SK-N-SH (cell line): ENCODE measurements at regions of chr10 and their contacts with region 1.

Region 1: GRCh38 chr10:127576051-127576450 is 26.9 kb downstream of the NPS start:
- DNase-seq: no peak
- H3K4me3 ChIP-seq: no peak overlapping the region
- H3K27ac ChIP-seq: no peak overlapping the region
- H3K4me1 ChIP-seq: no peaks in the 10 kb centered on the region
- H3K27me3 ChIP-seq: no peaks in the 10 kb centered on the region
- CTCF ChIP-seq: no peak
- EP300 ChIP-seq: no peak
- RAD21 ChIP-seq: no peak

Region 2: GRCh38 chr10:127492607-127493250 is 83.3 kb before region 1 on chr10:
- CTCF ChIA-PET with region 1: no interaction called
- POLR2A ChIA-PET with region 1: no interaction called
- DNase-seq: no peak
- H3K4me3 ChIP-seq: no peak overlapping the region
- H3K27ac ChIP-seq: no peak overlapping the region
- H3K4me1 ChIP-seq: peaks cover 0 to 6% of the 10 kb centered on the region in 2 experiments; a peak in 1 of 4 replicates
- H3K27me3 ChIP-seq: no peaks in the 10 kb centered on the region
- CTCF ChIP-seq: peak; percentile 14; the same call in 1 of the 2 replicates
- EP300 ChIP-seq: no peak
- RAD21 ChIP-seq: no peak

Region 3: DNA sequence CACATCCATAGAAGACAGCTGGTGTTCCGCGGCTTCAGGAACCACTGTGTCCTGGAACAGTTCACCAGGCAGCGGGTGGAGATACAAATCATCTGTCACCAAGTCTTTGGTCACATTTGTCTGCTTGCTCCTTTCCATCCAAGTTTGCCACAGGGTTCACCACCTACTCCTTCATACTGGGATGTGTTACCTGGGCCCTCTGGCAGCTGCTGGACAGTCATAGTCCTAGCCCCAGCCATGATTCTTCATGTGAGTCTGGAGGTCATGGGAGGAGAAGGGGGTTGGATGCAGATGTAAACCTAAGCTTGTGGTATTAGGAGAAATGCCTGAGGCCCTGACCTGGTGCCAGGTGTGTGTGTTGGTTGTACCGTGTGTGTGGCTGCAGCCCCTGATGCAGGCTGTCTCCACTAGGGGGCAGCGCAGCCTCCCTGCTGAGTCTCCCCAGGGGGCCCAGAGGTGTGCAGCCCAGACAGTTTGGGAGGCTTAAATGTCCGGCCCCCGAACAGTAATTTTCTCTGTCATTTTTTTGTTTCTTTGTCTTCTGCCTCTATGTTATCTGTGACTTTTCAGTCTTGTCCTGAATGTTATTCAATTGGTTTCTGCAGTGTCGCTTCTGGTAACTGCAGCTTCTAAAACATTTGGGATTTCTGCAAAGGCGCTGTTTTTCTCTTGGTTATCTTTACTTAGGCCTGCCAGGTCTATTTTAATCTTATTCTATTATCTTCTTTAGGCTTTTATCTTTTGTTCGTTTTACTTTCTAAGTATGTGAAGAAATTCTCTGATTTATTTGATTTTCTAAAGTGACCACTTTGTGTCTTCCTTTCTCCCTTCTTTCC is 12.1 kb before region 1 on chr10:
- CTCF ChIA-PET with region 1: interaction called, 11 read pairs
- POLR2A ChIA-PET with region 1: no interaction called
- DNase-seq: peak; percentile 61
- H3K4me3 ChIP-seq: peak overlapping the region in 1 of 2 experiments; percentile 41; a peak in 1 of 4 replicates
- H3K27ac ChIP-seq: no peak overlapping the region
- H3K4me1 ChIP-seq: no peaks in the 10 kb centered on the region
- H3K27me3 ChIP-seq: no peaks in the 10 kb centered on the region
- CTCF ChIP-seq: peak; percentile 54
- EP300 ChIP-seq: no peak
- RAD21 ChIP-seq: no peak; the same call in 1 of the 2 replicates

Region 4: GRCh38 chr10:127587668-127588365 is 11.8 kb after region 1 on chr10:
- CTCF ChIA-PET with region 1: no interaction called
- POLR2A ChIA-PET with region 1: no interaction called
- DNase-seq: no peak
- H3K4me3 ChIP-seq: no peak overlapping the region
- H3K27ac ChIP-seq: no peak overlapping the region
- H3K4me1 ChIP-seq: no peaks in the 10 kb centered on the region
- H3K27me3 ChIP-seq: no peaks in the 10 kb centered on the region
- CTCF ChIP-seq: no peak
- EP300 ChIP-seq: no peak
- RAD21 ChIP-seq: no peak